T-cell (primary cell): ENCODE measurements at regions of chr16 and their contacts with region 1.

Region 1: DNA sequence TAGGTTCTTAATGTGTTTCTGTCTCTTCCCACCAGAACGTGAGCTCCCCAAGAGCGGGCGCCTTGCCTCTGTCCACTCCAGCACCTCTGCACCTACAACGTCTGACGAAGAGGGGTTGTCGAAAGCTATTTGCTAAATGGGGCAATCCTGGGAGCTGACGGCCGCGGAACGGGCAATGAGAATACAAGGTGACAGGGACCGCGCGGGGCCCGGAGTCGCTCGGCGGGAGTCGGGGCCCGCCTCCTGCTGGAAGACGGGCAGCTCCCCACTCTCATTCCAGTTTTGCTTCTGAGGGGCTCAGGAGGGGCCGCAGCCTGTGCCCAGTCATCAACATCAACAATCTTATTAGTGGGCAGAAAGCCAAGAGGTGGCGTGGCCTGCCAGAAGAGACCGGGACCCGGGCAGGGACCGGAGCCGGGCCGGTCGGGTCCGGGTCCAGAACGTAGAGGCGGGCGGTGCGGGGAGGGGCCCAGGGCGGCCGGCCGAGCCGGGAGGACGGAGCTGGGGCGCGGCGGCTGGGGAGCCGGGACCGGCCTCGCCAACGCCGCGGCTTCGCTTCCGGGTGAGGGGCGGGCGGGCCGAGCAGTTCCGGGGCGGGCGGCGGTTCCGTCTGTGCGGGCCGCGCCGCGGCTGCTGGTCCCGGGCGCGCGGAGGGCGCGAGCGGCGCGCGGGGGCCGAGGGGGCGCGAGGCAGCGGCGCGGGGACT is at the start of gene MOSMO:
- DNase-seq: peak; percentile 20 to 78 (median 58)
- ATAC-seq: peak; percentile 93 to 97 (median 94)
- H3K4me3 ChIP-seq: peak within 1 kb of the TSS; percentile 83 to 89
- H3K4me3 Mint-ChIP-seq: peak within 1 kb of the TSS; percentile 83 to 97 (median 88)
- H3K27ac ChIP-seq: peak within 1 kb of the TSS; percentile 57
- H3K27ac Mint-ChIP-seq: peak within 1 kb of the TSS; percentile 88
- H3K4me1 ChIP-seq: peaks cover 14 to 20% of the 10 kb centered on the region in 2 experiments
- H3K4me1 Mint-ChIP-seq: peaks cover 44 to 50% (median 49%) of the 10 kb centered on the region in 3 donors
- H3K27me3 ChIP-seq: no peaks in the 10 kb centered on the region
- H3K27me3 Mint-ChIP-seq: no peaks in the 10 kb centered on the region
- total RNA-seq, gene MOSMO: 9.8 to 18.6 (median 17.3) TPM

Region 2: GRCh38 chr16:20704281-20704680 is 1303.4 kb before region 1 on chr16:
- CTCF ChIA-PET with region 1: no interaction called
- POLR2A ChIA-PET with region 1: no interaction called
- DNase-seq: no peak
- ATAC-seq: no peak
- H3K4me3 ChIP-seq: no peak overlapping the region
- H3K4me3 Mint-ChIP-seq: no peak overlapping the region
- H3K27ac ChIP-seq: no peak overlapping the region
- H3K27ac Mint-ChIP-seq: no peak overlapping the region
- H3K4me1 ChIP-seq: no peaks in the 10 kb centered on the region
- H3K4me1 Mint-ChIP-seq: no peaks in the 10 kb centered on the region
- H3K27me3 ChIP-seq: no peaks in the 10 kb centered on the region
- H3K27me3 Mint-ChIP-seq: peaks cover 0 to 2% of the 10 kb centered on the region in 2 donors

Region 3: DNA sequence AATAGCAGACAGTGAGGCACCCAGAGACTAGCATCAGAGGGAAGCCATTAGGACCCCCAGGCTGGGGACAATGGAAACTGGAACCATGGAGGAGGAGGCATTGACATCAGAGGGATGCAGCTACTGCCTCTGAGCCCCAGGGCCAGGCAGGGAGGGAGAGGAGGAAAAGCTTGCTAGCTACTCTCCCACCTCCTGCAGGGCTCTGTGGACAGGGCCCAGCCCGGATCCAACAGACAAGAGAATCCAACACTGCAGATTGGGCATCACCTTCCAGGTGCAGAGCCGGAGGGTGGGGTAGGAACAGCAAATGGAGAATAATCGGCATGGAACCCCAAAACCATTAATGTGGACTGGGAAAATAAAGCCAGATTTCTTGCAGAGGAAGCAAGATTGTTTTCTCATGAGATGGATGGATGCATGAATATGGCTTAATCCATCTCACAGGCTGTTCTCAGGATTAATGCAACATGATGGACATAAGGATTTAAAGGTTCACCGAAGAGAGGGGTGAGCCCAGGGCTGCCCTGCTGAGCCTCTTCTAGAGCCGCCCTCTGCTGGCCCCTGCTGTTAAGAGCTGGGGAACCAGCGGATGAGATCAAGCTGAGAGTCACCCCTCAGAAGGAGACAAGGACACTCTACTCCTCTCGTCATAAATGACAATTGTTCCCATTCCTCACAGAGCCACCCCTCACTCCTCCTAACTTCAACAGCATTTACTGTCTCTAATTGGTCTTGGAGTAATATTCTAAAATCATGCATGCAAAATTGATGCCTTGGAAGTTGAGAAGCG is 905.8 kb before region 1 on chr16:
- CTCF ChIA-PET with region 1: no interaction called
- POLR2A ChIA-PET with region 1: no interaction called
- DNase-seq: peak in 18 of 35 experiments; percentile 1 to 26 (median 7)
- ATAC-seq: peak in 1 of 4 experiments; percentile 60
- H3K4me3 ChIP-seq: no peak overlapping the region
- H3K4me3 Mint-ChIP-seq: no peak overlapping the region
- H3K27ac ChIP-seq: no peak overlapping the region
- H3K27ac Mint-ChIP-seq: no peak overlapping the region
- H3K4me1 ChIP-seq: no peaks in the 10 kb centered on the region
- H3K4me1 Mint-ChIP-seq: no peaks in the 10 kb centered on the region
- H3K27me3 ChIP-seq: peaks cover 0 to 6% of the 10 kb centered on the region in 2 experiments
- H3K27me3 Mint-ChIP-seq: peaks cover 21 to 26% of the 10 kb centered on the region in 2 donors

Region 4: DNA sequence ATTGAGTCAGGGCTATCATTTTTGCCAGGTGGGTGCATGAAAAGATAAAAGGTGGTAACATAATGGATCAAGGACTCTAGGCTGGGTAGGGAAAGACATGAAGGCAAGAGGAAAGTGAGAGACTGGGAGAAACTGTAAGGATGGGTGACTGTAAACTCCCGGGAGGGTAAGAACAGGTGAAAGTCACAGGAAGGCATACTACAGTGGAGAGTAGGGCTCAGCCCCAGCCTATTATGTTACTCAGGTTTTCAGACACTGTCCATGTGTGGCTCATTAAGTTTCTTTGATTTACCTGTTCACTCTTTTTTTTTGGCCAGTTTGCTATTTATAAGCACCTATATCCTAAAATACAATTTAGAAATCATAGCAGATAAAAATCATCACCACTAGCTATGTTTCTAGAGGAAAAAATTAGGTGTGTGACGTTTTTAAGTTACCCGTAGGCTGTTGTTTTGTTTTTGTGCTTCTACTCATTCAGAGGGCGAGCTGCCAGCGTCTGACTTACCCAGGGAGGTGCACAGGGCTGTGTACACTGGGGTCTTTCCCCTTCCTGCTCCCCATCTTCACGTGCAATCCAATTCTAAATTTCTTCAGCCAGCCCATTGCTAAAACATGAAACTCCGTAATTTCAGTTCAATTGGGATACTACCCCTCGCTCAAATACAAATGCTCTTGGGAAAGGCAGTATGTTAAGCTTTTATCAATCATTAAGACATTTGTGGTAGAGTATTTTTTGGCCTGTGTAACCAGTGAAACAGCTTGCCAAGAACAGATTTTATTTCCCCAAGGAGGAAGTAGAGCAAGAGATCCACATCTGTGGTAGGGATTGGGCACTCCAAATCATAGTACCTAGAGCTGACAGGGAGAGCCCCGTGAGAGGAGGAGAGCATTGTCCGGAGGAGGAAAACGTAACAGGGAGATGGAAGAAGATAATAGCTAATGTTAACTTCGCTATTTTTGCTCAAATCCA is 63.0 kb after region 1 on chr16:
- CTCF ChIA-PET with region 1: no interaction called
- POLR2A ChIA-PET with region 1: no interaction called
- DNase-seq: no peak
- ATAC-seq: no peak
- H3K4me3 ChIP-seq: no peak overlapping the region
- H3K4me3 Mint-ChIP-seq: no peak overlapping the region
- H3K27ac ChIP-seq: no peak overlapping the region
- H3K27ac Mint-ChIP-seq: no peak overlapping the region
- H3K4me1 ChIP-seq: no peaks in the 10 kb centered on the region
- H3K4me1 Mint-ChIP-seq: peaks cover 0 to 7% (median 3%) of the 10 kb centered on the region in 3 donors
- H3K27me3 ChIP-seq: no peaks in the 10 kb centered on the region
- H3K27me3 Mint-ChIP-seq: no peaks in the 10 kb centered on the region

Region 5: GRCh38 chr16:22098405-22099255 is 91.0 kb after region 1 on chr16:
- CTCF ChIA-PET with region 1: interaction called, 9 to 10 read pairs
- POLR2A ChIA-PET with region 1: no interaction called
- DNase-seq: peak in 2 of 35 experiments; percentile 20 to 60
- ATAC-seq: peak in 3 of 4 experiments; percentile 63 to 75 (median 71)
- H3K4me3 ChIP-seq: no peak overlapping the region
- H3K4me3 Mint-ChIP-seq: no peak overlapping the region
- H3K27ac ChIP-seq: no peak overlapping the region
- H3K27ac Mint-ChIP-seq: no peak overlapping the region
- H3K4me1 ChIP-seq: peaks cover 0 to 3% of the 10 kb centered on the region in 2 experiments
- H3K4me1 Mint-ChIP-seq: peaks cover 0 to 3% (median 2%) of the 10 kb centered on the region in 3 donors
- H3K27me3 ChIP-seq: peaks cover 0 to 14% of the 10 kb centered on the region in 2 experiments
- H3K27me3 Mint-ChIP-seq: peaks cover 15% of the 10 kb centered on the region in 2 donors

Region 6: GRCh38 chr16:22297114-22297878 is 289.6 kb after region 1 on chr16 and contains the start of gene POLR3E:
- CTCF ChIA-PET with region 1: interaction called, 6 to 10 read pairs
- POLR2A ChIA-PET with region 1: interaction called in 1 of 2 experiments, 3 read pairs
- DNase-seq: peak; percentile 96 to 100 (median 100)
- ATAC-seq: peak; percentile 75 to 94 (median 91)
- H3K4me3 ChIP-seq: peak within 1 kb of the TSS; percentile 88 to 92
- H3K4me3 Mint-ChIP-seq: peak within 1 kb of the TSS; percentile 94 to 95 (median 94)
- H3K27ac ChIP-seq: peak within 1 kb of the TSS; percentile 96
- H3K27ac Mint-ChIP-seq: peak within 1 kb of the TSS; percentile 94 to 96
- H3K4me1 ChIP-seq: peaks cover 10 to 45% of the 10 kb centered on the region in 2 experiments
- H3K4me1 Mint-ChIP-seq: peaks cover 46 to 49% (median 48%) of the 10 kb centered on the region in 3 donors
- H3K27me3 ChIP-seq: peaks cover 0 to 5% of the 10 kb centered on the region in 2 experiments
- H3K27me3 Mint-ChIP-seq: peaks cover 0 to 4% of the 10 kb centered on the region in 2 donors
- total RNA-seq, gene POLR3E: 79.3 to 174 (median 99.7) TPM